Adrenal gland (tissue), 19 donors: ENCODE measurements at regions of chr7 and their contacts with region 1.

Region 1: GRCh38 chr7:75994388-75995051 is at the start of gene TMEM120A:
- DNase-seq: peak; percentile 97 to 99 (median 98)
- H3K4me3 ChIP-seq: peak within 1 kb of the TSS in 3 of 4 donors; percentile 13 to 72 (median 66)
- H3K27ac ChIP-seq: peak within 1 kb of the TSS; percentile 95 to 98 (median 97)
- H3K4me1 ChIP-seq: peaks cover 28 to 38% of the 10 kb centered on the region in 2 donors
- H3K27me3 ChIP-seq: no peaks in the 10 kb centered on the region
- CTCF ChIP-seq: peak in 5 of 6 experiments; percentile 5 to 39 (median 22)
- POLR2A ChIP-seq: peak; percentile 79 to 97
- total RNA-seq, gene TMEM120A: 51.4 to 277 (median 81.1) TPM

Region 2: DNA sequence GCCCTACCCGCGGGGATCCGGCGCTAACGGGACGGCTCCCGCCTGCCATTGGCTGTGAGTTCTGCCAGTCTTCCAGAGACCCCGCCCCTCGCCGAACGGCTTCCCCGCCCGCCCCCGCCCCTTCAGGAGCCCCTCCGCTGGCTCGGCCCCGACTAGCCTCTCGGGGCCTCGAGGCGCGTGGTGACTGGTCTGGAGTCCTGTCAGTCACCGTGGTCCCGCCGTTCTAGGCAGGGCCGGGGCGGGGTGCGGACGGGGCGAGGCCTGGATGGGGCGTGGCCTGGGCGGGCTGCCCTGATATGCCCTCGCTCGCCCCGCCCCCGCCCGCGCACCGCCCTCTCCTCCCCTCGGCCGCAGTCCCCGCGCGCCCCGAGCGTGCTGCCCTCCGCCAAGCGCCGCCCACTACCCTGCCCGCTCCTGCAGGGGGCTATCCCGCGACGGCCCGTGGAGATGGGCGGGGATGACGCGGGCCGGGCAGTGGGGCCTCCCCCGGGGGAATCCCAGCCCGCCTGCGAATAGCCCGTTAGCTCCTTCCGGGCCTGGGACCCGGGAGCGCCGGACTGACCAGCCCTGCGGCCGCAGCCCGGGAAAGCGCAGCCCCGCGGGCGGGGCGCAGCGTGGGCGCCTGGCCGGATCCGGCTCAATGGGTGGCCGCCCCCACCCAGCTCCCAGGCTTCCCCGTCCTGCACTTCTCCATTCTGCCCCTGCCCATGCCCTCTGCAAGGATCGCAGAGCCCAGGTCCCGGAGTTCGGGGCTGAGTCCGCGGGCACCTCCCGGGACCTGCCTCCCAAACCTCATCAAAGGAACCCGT is 255.3 kb before region 1 on chr7:
- intact Hi-C with region 1: no loop called
- DNase-seq: peak; percentile 99 to 100 (median 100)
- H3K4me3 ChIP-seq: peak overlapping the region; percentile 68 to 96 (median 92)
- H3K27ac ChIP-seq: peak overlapping the region; percentile 65 to 96 (median 75)
- H3K4me1 ChIP-seq: peaks cover 0 to 10% of the 10 kb centered on the region in 2 donors
- H3K27me3 ChIP-seq: no peaks in the 10 kb centered on the region
- CTCF ChIP-seq: peak in 2 of 6 experiments; percentile 26 to 36
- POLR2A ChIP-seq: peak in 1 of 2 donors; percentile 60

Region 3: DNA sequence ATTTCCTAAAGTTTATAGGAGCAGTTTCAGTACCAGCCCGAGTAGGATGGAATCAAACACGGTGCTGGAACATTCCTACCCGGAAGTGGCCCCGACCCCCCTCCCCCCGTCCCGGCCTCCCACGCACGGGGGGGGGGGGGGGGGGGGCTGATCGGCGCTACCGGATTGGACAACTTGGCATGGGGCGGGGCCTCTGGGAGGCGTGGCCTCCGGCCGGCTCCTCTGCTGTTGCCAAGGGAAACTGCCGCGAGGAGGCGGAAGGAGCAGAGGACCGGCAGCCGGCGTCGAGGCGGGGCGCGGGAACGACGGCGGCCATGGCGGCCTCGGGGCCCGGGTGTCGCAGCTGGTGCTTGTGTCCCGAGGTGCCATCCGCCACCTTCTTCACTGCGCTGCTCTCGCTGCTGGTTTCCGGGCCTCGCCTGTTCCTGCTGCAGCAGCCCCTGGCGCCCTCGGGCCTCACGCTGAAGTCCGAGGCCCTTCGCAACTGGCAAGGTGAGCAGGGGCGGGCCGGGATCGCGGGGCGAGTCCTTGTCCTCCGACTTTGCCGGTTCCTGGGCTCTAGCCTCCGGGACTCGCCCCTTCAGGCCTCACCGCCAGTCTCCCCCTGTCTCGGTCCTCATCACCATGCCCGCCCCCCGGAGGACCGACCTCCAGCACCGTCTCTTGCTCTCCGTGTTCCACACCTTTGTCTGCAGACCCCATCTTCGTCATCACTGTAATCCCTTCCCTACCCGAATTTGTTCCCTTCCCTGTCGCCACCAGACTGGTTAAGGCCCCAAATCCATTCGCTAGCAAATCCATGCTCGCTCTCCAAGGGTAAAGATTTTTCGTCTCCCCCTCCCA is 115.5 kb before region 1 on chr7 and contains the start of gene RHBDD2:
- intact Hi-C with region 1: loop called in 1 of 2 experiments (anchors 10 kb)
- DNase-seq: peak; percentile 96 to 98 (median 97)
- H3K4me3 ChIP-seq: peak within 1 kb of the TSS; percentile 27 to 94 (median 87)
- H3K27ac ChIP-seq: peak within 1 kb of the TSS; percentile 81 to 95 (median 86)
- H3K4me1 ChIP-seq: peaks cover 13 to 29% of the 10 kb centered on the region in 2 donors
- H3K27me3 ChIP-seq: no peaks in the 10 kb centered on the region
- CTCF ChIP-seq: peak in 3 of 6 experiments; percentile 18 to 29 (median 20)
- POLR2A ChIP-seq: peak; percentile 97 to 98
- total RNA-seq, gene RHBDD2: 123 to 575 (median 256) TPM

Region 4: DNA sequence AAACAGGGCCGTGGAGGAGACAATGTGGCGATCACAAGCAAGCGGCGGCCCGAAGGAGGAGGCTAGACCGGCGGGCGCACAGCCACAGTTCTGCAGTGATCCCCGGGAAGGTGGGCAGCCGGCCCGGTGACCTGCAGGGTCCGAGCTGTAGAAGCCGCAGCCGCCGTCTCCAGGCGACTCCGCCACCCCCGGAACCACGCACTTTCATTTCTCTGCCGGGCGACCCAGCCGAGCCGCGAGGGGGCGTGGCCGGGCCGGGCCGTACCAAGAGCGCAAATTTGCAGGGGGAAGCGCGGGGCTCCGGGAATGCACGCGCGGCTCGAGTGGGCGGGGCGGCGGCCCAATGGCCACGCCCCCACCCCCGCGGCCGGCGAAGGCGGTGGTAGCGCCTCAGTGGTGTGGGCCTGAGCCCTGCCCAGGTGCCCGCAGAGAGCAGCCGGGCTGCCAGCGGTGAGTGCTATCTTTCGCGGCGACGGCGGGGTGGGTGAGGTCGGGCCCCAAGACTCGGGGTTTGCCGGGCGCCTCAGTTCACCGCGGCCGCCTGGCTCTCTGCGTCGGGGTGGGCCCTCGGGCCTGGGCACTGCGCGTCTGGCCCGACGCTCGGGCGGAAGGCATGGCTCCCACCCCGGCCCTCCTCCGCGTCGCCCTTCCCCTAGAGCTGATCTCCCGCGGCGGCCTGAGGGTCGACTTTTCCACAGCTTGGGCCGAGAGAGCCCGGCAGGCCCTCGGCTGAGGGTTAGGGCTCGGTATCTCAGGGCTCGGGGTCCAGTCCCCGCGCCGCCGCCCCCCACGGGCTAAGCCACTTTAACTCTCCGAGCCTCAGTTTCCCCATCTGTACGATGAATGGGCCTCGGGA is 79.6 kb before region 1 on chr7 and contains the start of gene POR:
- intact Hi-C with region 1: loop called (anchors 5 to 10 kb)
- DNase-seq: peak; percentile 94 to 98 (median 96)
- H3K4me3 ChIP-seq: peak within 1 kb of the TSS in 3 of 4 donors; percentile 80 to 88 (median 84)
- H3K27ac ChIP-seq: peak within 1 kb of the TSS; percentile 86 to 97 (median 94)
- H3K4me1 ChIP-seq: peaks cover 24 to 47% of the 10 kb centered on the region in 2 donors
- H3K27me3 ChIP-seq: no peaks in the 10 kb centered on the region
- CTCF ChIP-seq: peak in 1 of 6 experiments; percentile 46
- POLR2A ChIP-seq: peak; percentile 99 to 100
- total RNA-seq, gene POR: 268 to 1,301 (median 582) TPM

Region 5: DNA sequence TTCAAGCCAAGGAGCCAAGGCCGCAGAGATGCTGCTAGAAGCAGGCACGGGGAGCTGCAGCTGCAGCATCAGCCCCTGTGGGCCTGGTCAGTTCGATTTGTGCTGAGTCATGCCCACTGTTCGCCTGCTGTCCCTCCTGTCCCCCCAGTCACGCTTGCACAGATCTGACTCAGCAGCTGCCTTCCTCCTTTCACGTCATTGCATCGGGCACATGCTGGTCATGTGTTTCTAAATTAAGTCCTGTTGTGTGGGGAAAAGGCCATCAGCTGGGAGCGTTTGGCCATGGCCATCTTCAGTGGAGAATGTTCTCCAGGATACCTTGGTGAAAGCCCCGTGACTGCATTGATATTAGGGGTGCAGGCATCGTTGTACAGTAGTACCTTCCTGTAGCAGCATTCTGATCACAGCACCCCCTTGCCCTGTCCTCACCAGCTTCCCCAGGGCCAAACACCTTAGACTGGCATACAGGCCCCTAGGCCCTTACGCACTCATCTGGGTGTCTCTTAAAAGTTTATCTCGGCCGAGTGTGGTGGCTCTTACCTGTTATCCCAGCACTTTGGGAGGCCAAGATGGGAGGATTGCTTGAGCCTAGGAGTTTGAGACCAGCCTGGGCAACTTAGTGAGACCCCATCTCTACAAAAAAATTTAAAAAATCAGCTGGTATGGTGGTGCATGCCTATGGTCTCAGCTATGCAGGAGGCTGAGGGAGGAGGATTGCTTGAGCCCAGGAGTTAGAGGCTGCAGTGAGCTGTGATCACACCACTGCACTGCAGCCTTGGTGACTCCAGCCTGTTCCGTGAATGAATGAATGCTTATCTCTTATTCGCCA is 56.3 kb before region 1 on chr7:
- intact Hi-C with region 1: no loop called
- DNase-seq: peak; percentile 91 to 98 (median 97)
- H3K4me3 ChIP-seq: no peak overlapping the region
- H3K27ac ChIP-seq: peak overlapping the region; percentile 73 to 98 (median 89)
- H3K4me1 ChIP-seq: peaks cover 27 to 48% of the 10 kb centered on the region in 2 donors
- H3K27me3 ChIP-seq: no peaks in the 10 kb centered on the region
- CTCF ChIP-seq: no peak
- POLR2A ChIP-seq: peak in 1 of 2 donors; percentile 73

Region 6: DNA sequence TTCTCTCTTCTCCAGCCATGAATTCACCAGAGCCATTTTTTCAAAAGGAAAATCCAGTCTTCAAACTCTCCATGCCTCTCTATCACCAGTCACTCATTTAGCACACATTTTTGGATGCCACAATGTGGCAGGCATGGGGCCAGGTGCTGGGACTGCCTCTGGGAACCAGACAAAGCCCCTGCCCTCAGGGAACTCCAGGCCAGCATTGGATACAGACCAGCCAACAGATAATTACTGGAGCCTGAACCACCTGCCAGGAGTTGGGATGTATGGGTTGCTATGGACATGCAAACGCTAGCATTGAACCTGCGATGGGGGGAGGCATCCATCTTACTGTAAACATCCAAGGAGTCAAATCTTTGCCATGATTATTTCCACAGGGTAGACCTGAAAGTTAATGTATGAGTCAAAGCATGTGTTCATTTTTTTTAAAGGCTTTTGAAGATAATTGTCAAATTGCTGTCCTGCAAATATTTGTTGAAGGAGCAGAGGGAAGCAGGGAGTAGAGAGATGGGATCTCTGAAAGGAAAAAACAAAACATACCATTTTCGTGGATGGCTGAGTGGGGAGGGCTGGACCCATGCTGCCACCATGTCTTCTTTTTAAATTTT is 250.4 kb after region 1 on chr7:
- intact Hi-C with region 1: no loop called
- DNase-seq: no peak
- H3K4me3 ChIP-seq: no peak overlapping the region
- H3K27ac ChIP-seq: no peak overlapping the region
- H3K4me1 ChIP-seq: no peaks in the 10 kb centered on the region
- H3K27me3 ChIP-seq: no peaks in the 10 kb centered on the region
- CTCF ChIP-seq: no peak
- POLR2A ChIP-seq: no peak